ENCODE measurements at regions of chr10 and their contacts with region 1.

Region 1: GRCh38 chr10:119849031-119849789 is 23.4 kb downstream of the MCMBP start:
- DNase-seq: no peak
- ATAC-seq: no peak
- H3K4me3 ChIP-seq: no peak overlapping the region
- H3K4me3 Mint-ChIP-seq: no peak overlapping the region
- H3K27ac ChIP-seq: no peak overlapping the region
- H3K27ac Mint-ChIP-seq: no peak overlapping the region
- H3K4me1 ChIP-seq: no peaks in the 10 kb centered on the region
- H3K4me1 Mint-ChIP-seq: peaks cover 0 to 2% (median 0%) of the 10 kb centered on the region in 3 donors
- H3K27me3 ChIP-seq: no peaks in the 10 kb centered on the region
- H3K27me3 Mint-ChIP-seq: no peaks in the 10 kb centered on the region

Region 2: DNA sequence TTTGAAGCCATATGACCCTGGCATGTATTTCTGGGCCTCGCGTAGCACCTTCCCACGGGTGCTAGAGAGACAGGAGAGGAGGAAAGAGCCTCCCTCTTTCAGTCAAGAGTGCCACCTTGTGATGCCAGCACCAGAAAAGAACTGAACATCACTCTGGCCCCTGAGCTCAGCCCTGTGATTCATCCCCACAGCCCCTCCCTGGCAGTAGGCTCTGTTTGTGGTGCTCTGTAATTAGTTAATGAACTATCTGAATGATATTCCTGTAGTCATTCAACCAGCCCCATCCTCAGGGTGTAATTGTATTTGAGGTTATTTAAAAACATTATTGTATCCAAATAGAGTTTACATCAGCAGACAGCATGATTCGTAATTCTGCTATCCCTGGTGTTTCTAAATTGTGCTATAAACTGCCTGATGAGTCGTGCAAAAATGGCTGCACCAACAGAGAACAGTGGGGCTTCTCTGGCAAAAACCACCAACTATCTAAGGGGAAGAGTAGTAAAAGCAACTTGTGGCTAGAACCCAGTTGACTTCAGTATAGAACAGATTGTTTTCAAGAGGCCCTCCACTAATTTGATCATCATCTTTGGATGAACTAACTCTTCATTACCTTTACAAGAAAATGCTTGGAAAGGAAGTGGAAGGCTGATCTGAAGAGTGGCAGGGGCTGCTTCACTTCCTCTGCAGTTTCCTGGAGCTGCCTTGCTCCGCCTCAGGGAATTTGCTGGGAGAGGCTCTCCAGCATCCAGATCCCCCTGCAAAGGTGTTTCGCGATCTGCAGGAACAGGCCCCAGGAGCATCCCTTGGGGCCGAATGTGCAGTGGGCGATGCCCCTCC is 228.8 kb before region 1 on chr10:
- CTCF ChIA-PET with region 1: interaction called in 1 of 2 experiments, 12 read pairs
- POLR2A ChIA-PET with region 1: no interaction called
- DNase-seq: no peak
- ATAC-seq: peak in 1 of 4 experiments; percentile 12
- H3K4me3 ChIP-seq: no peak overlapping the region
- H3K4me3 Mint-ChIP-seq: no peak overlapping the region
- H3K27ac ChIP-seq: no peak overlapping the region
- H3K27ac Mint-ChIP-seq: peak overlapping the region in 1 of 2 donors; percentile 23
- H3K4me1 ChIP-seq: no peaks in the 10 kb centered on the region
- H3K4me1 Mint-ChIP-seq: peaks cover 0 to 6% (median 4%) of the 10 kb centered on the region in 3 donors
- H3K27me3 ChIP-seq: no peaks in the 10 kb centered on the region
- H3K27me3 Mint-ChIP-seq: peaks cover 0 to 4% of the 10 kb centered on the region in 2 donors

Region 3: DNA sequence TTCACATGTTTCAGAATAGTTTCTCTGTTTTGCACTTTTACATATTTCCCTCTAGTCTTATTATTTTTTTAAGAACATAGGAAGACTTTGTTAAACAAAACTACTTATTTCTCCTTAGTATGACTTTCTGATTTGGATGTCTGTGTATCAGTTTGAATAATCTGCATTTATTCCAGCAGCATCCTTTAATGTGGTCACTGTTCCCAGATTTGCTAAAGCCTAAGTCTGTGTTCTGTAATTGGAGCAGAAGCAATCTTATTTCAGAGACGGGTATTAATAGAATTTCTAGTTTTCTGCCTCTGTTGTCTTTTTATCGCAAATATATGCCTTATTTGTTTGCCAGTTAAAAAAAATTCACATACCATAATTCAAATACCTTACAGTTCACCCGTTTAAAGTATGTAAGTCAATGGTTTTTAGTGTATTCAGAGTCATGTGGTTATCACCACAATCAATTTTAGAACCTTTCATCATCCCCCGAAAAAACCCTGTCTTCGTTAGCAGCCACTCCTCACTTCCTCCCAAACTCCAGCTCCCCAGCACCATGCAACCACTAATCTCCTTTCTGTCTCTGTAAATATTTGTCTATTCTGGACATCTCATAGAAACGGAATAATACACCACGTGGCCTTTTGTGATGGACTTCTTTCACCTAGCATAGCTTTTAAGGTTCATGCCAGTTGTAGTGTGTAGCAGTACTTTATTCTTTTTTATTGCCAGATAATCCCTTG is 64.7 kb before region 1 on chr10:
- CTCF ChIA-PET with region 1: no interaction called
- POLR2A ChIA-PET with region 1: no interaction called
- DNase-seq: peak in 6 of 35 experiments; percentile 2 to 37 (median 4)
- ATAC-seq: peak in 3 of 4 experiments; percentile 69 to 91 (median 77)
- H3K4me3 ChIP-seq: no peak overlapping the region
- H3K4me3 Mint-ChIP-seq: peak overlapping the region in 2 of 3 donors; percentile 9 to 29
- H3K27ac ChIP-seq: no peak overlapping the region
- H3K27ac Mint-ChIP-seq: peak overlapping the region; percentile 7 to 50
- H3K4me1 ChIP-seq: peaks cover 6 to 19% of the 10 kb centered on the region in 2 experiments
- H3K4me1 Mint-ChIP-seq: peaks cover 29 to 39% (median 34%) of the 10 kb centered on the region in 3 donors
- H3K27me3 ChIP-seq: no peaks in the 10 kb centered on the region
- H3K27me3 Mint-ChIP-seq: no peaks in the 10 kb centered on the region

Region 4: DNA sequence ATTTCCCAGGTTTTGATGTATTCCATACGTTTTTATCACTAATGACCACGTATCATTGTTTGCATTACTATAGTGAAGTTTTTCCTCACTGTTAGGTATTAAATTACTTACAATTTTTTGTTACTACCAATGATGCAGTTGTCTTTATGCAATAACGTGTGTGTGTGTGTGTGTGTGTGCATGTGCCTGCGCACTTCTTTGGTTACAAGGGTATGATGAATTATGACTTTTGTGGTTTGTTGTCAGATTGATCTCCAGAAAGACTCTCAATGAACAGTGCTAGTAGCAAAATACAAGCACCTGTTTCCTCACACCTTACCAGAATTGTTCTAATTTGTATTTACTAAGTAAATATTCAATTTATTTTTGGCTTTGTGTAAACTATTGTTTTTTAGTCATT is 28.0 kb before region 1 on chr10:
- CTCF ChIA-PET with region 1: no interaction called
- POLR2A ChIA-PET with region 1: no interaction called
- DNase-seq: no peak
- ATAC-seq: no peak
- H3K4me3 ChIP-seq: no peak overlapping the region
- H3K4me3 Mint-ChIP-seq: no peak overlapping the region
- H3K27ac ChIP-seq: no peak overlapping the region
- H3K27ac Mint-ChIP-seq: no peak overlapping the region
- H3K4me1 ChIP-seq: peaks cover 0 to 2% of the 10 kb centered on the region in 2 experiments
- H3K4me1 Mint-ChIP-seq: no peaks in the 10 kb centered on the region
- H3K27me3 ChIP-seq: no peaks in the 10 kb centered on the region
- H3K27me3 Mint-ChIP-seq: no peaks in the 10 kb centered on the region

Region 5: GRCh38 chr10:119834188-119834587 is 15.0 kb before region 1 on chr10:
- CTCF ChIA-PET with region 1: interaction called in 1 of 2 experiments, 11 read pairs
- POLR2A ChIA-PET with region 1: no interaction called
- DNase-seq: no peak
- ATAC-seq: no peak
- H3K4me3 ChIP-seq: no peak overlapping the region
- H3K4me3 Mint-ChIP-seq: no peak overlapping the region
- H3K27ac ChIP-seq: peak overlapping the region; percentile 1
- H3K27ac Mint-ChIP-seq: peak overlapping the region; percentile 54 to 65
- H3K4me1 ChIP-seq: no peaks in the 10 kb centered on the region
- H3K4me1 Mint-ChIP-seq: peaks cover 0 to 15% (median 5%) of the 10 kb centered on the region in 3 donors
- H3K27me3 ChIP-seq: no peaks in the 10 kb centered on the region
- H3K27me3 Mint-ChIP-seq: no peaks in the 10 kb centered on the region

Region 6: GRCh38 chr10:119859420-119860258 is 10.4 kb after region 1 on chr10:
- CTCF ChIA-PET with region 1: interaction called in 1 of 2 experiments, 3 read pairs
- POLR2A ChIA-PET with region 1: interaction called in 1 of 2 experiments, 10 read pairs
- DNase-seq: peak in 1 of 35 experiments; percentile 71
- ATAC-seq: peak in 3 of 4 experiments; percentile 58 to 60 (median 59)
- H3K4me3 ChIP-seq: no peak overlapping the region
- H3K4me3 Mint-ChIP-seq: no peak overlapping the region
- H3K27ac ChIP-seq: no peak overlapping the region
- H3K27ac Mint-ChIP-seq: peak overlapping the region; percentile 48 to 49
- H3K4me1 ChIP-seq: peaks cover 5 to 8% of the 10 kb centered on the region in 2 experiments
- H3K4me1 Mint-ChIP-seq: peaks cover 45 to 49% (median 47%) of the 10 kb centered on the region in 3 donors
- H3K27me3 ChIP-seq: no peaks in the 10 kb centered on the region
- H3K27me3 Mint-ChIP-seq: no peaks in the 10 kb centered on the region

Region 7: DNA sequence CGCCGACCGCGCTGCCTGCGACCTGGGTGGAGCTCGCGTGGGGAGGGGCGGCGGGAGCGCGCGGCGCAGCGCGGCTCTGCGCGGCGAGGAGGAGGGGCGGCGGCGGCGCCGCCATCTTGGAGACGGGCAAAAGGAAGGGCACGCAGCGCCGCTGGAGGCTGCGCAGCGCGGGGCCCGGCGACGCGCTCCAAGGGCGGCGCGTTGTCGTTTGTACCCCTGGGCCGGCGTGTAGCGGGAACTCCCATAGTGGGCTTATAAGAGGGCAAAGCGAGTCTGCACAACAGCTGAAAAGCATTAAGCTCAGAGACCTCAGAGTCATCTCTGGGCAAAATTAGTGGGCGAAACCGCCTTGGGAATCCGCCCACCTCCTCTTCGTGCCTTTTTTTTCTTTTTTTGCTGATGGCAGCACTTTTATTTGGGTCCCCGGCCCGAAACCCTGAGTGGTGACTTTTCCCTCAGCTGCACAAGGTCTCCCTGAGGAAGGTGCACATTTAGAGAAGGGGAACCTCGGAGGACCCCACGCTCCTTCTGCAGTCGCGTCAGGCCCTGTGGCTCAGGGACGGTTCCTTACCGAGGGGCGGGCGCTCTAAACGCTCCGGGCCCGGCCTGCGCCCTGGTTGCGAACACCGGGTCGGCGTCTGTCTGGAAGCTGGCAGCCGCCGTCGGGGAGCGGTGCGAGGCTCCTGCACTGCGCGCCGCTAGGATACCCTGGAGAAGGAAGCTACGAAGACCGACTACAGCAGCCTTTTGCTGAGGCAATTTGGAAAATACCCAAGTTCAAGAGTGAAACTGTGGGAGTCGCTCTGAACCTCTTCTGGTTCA is 23.9 kb after region 1 on chr10:
- CTCF ChIA-PET with region 1: no interaction called
- POLR2A ChIA-PET with region 1: interaction called in 1 of 2 experiments, 11 read pairs
- DNase-seq: peak; percentile 76 to 95 (median 86)
- ATAC-seq: peak; percentile 92 to 96 (median 92)
- H3K4me3 ChIP-seq: peak overlapping the region; percentile 87 to 90
- H3K4me3 Mint-ChIP-seq: peak overlapping the region; percentile 83 to 89 (median 86)
- H3K27ac ChIP-seq: peak overlapping the region; percentile 85
- H3K27ac Mint-ChIP-seq: peak overlapping the region; percentile 87 to 92
- H3K4me1 ChIP-seq: peaks cover 15 to 30% of the 10 kb centered on the region in 2 experiments
- H3K4me1 Mint-ChIP-seq: peaks cover 40 to 45% (median 44%) of the 10 kb centered on the region in 3 donors
- H3K27me3 ChIP-seq: no peaks in the 10 kb centered on the region
- H3K27me3 Mint-ChIP-seq: no peaks in the 10 kb centered on the region